ENCODE measurements at regions of chr7 and their contacts with region 1.

Region 1: GRCh38 chr7:149489391-149490024 is 8.1 kb downstream of the ZNF746 start:
- DNase-seq: no peak
- ATAC-seq: peak; percentile 98
- H3K4me3 ChIP-seq: no peak overlapping the region
- H3K27ac ChIP-seq: no peak overlapping the region
- H3K4me1 ChIP-seq: no peaks in the 10 kb centered on the region
- H3K27me3 ChIP-seq: no peaks in the 10 kb centered on the region
- CTCF ChIP-seq: peak; percentile 43 to 52 (median 47); a peak in 4 of 6 replicates
- POLR2A ChIP-seq: no peak
- RAD21 ChIP-seq: peak; percentile 30; the same call in 1 of the 2 replicates

Region 2: DNA sequence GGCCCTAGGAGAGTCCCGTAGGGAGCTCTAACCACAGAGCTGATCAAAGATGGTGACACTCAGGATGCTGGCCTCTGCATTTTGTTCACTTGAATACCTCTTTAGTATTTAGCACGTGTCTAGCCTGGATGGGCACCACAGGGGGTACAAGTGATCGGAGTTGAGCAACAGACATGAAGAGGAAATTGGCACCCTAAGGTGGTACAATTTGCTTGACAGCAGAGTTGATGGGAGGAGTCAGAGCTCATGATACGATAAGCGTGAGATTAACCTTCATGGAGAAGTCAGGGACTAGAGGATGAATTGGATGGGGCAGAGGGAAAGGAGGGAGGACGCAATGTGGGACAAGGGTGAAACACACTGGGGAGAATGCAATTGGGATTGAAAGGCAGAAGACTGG is 260.0 kb before region 1 on chr7:
- CTCF ChIA-PET with region 1: no interaction called
- POLR2A ChIA-PET with region 1: no interaction called
- RAD21 ChIA-PET with region 1: no interaction called
- intact Hi-C with region 1: no loop called
- DNase-seq: no peak
- ATAC-seq: no peak
- H3K4me3 ChIP-seq: no peak overlapping the region
- H3K27ac ChIP-seq: no peak overlapping the region
- H3K4me1 ChIP-seq: peaks cover 20 to 31% of the 10 kb centered on the region in 2 experiments
- H3K27me3 ChIP-seq: no peaks in the 10 kb centered on the region
- CTCF ChIP-seq: no peak
- POLR2A ChIP-seq: no peak
- RAD21 ChIP-seq: no peak

Region 3: DNA sequence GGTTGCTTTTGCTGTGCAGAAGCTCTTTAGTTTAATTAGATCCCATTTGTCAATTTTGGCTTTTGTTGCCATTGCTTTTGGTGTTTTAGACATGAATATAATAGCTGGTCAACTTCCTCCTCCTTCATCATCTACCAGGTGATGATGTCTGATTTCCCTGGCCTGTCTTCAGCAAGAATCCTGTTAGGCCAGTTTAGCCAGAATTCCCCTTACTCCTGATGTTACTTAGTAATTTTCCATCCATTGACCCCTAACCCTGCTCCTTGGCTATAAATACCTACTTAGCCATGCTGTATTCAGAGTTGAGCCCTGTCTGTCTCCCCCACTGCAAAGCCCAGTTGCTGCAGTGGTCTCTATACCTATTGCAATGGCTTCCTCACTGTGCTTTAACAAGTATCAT is 120.0 kb before region 1 on chr7:
- CTCF ChIA-PET with region 1: no interaction called
- POLR2A ChIA-PET with region 1: no interaction called
- RAD21 ChIA-PET with region 1: no interaction called
- intact Hi-C with region 1: no loop called
- DNase-seq: peak; percentile 12
- ATAC-seq: peak; percentile 25; the same call in 1 of the 2 replicates
- H3K4me3 ChIP-seq: peak overlapping the region in 1 of 2 experiments; percentile 30; a peak in 1 of 4 replicates
- H3K27ac ChIP-seq: no peak overlapping the region
- H3K4me1 ChIP-seq: peaks cover 13 to 21% of the 10 kb centered on the region in 2 experiments
- H3K27me3 ChIP-seq: no peaks in the 10 kb centered on the region
- CTCF ChIP-seq: no peak
- POLR2A ChIP-seq: no peak
- RAD21 ChIP-seq: 0 out of 2 replicates have a peak, but pooled peaks have one; percentile 10

Region 4: GRCh38 chr7:149598721-149599306 is 109.3 kb after region 1 on chr7:
- CTCF ChIA-PET with region 1: no interaction called
- POLR2A ChIA-PET with region 1: no interaction called
- RAD21 ChIA-PET with region 1: no interaction called
- intact Hi-C with region 1: loop called (anchors 1 kb)
- DNase-seq: peak; percentile 16
- ATAC-seq: peak; percentile 87
- H3K4me3 ChIP-seq: no peak overlapping the region
- H3K27ac ChIP-seq: no peak overlapping the region
- H3K4me1 ChIP-seq: no peaks in the 10 kb centered on the region
- H3K27me3 ChIP-seq: no peaks in the 10 kb centered on the region
- CTCF ChIP-seq: peak; percentile 60 to 67 (median 61)
- POLR2A ChIP-seq: no peak
- RAD21 ChIP-seq: peak; percentile 74

Measured in HCT116 (cell line).